Esophagus squamous epithelium (tissue), 5 donors: ENCODE measurements at regions of chr4 and their contacts with region 1.

Region 1: GRCh38 chr4:186587416-186588018 is 32.1 kb upstream of the MTNR1A start:
- DNase-seq: no peak
- H3K4me3 ChIP-seq: no peak overlapping the region
- H3K27ac ChIP-seq: no peak overlapping the region
- H3K4me1 ChIP-seq: no peaks in the 10 kb centered on the region
- H3K27me3 ChIP-seq: no peaks in the 10 kb centered on the region
- CTCF ChIP-seq: peak; percentile 59 to 95 (median 78)
- POLR2A ChIP-seq: no peak

Region 2: DNA sequence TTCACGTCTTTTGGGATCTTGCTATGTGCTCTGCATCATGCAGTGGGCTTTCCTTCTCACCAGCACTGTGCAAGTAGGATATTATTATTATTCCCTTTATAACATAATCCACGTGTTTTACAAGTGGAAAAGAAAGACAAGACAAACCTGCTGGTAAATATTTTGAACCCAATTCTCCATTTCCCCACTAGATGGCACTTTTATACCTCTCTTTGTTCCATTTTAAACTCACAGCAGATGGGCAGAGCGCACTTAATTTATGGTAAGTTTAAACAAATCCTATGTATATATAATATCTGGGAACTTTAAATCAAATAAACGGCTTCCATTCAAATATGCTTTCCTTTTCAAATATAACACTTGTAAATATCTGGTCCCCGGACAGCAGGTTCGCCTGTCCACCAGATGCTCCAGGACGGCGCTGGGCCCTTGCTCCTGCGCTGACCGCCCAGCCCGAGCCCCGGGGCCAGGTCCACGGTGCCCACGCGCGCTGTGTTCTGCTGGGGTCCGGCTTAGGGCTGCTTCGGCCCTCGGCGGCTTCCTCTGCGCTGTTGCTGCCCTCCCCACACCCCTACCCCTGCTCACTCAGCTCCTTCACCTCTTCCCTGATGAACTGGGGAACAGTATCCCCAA is 290.4 kb before region 1 on chr4:
- intact Hi-C with region 1: loop called (anchors 5 kb)
- DNase-seq: no peak
- H3K4me3 ChIP-seq: no peak overlapping the region
- H3K27ac ChIP-seq: no peak overlapping the region
- H3K4me1 ChIP-seq: no peaks in the 10 kb centered on the region
- H3K27me3 ChIP-seq: peaks cover 0 to 25% (median 0%) of the 10 kb centered on the region in 4 donors
- CTCF ChIP-seq: peak; percentile 22 to 69 (median 48)
- POLR2A ChIP-seq: no peak

Region 3: DNA sequence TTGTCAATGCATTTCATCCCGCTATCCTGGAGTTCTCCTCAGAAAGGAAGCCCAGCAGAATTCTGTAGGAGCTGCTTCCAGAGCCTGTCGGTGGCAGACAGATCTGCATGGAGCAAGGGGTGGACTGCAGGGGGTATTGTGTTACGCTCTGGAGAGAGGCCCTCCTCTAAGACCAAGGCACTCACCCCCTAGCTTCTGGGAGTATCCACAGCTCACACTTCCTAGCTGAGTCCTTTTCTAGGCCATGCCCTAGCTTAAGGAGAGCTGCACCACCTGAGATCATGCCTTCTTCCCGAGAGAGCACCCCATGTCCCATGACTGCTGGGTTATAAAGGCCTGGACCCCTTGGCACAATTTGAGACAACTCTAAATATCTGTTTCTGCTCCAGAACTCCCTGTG is 71.2 kb before region 1 on chr4:
- intact Hi-C with region 1: no loop called
- DNase-seq: no peak
- H3K4me3 ChIP-seq: no peak overlapping the region
- H3K27ac ChIP-seq: no peak overlapping the region
- H3K4me1 ChIP-seq: no peaks in the 10 kb centered on the region
- H3K27me3 ChIP-seq: no peaks in the 10 kb centered on the region
- CTCF ChIP-seq: no peak
- POLR2A ChIP-seq: no peak

Region 4: GRCh38 chr4:186739802-186740434 is 152.4 kb after region 1 on chr4:
- intact Hi-C with region 1: no loop called
- DNase-seq: no peak
- H3K4me3 ChIP-seq: no peak overlapping the region
- H3K27ac ChIP-seq: no peak overlapping the region
- H3K4me1 ChIP-seq: peaks cover 0 to 6% (median 0%) of the 10 kb centered on the region in 3 donors
- H3K27me3 ChIP-seq: no peaks in the 10 kb centered on the region
- CTCF ChIP-seq: no peak
- POLR2A ChIP-seq: no peak